ENCODE measurements at regions of chr10 and their contacts with region 1.

Region 1: GRCh38 chr10:97278491-97278989 is 13.9 kb downstream of the ARHGAP19 start:
- DNase-seq: no peak
- ATAC-seq: peak; percentile 67
- H3K4me3 Mint-ChIP-seq: no peak overlapping the region
- H3K27ac Mint-ChIP-seq: no peak overlapping the region
- H3K4me1 Mint-ChIP-seq: peaks cover 20% of the 10 kb centered on the region
- H3K27me3 Mint-ChIP-seq: no peaks in the 10 kb centered on the region
- CTCF ChIP-seq: peak; percentile 49

Region 2: DNA sequence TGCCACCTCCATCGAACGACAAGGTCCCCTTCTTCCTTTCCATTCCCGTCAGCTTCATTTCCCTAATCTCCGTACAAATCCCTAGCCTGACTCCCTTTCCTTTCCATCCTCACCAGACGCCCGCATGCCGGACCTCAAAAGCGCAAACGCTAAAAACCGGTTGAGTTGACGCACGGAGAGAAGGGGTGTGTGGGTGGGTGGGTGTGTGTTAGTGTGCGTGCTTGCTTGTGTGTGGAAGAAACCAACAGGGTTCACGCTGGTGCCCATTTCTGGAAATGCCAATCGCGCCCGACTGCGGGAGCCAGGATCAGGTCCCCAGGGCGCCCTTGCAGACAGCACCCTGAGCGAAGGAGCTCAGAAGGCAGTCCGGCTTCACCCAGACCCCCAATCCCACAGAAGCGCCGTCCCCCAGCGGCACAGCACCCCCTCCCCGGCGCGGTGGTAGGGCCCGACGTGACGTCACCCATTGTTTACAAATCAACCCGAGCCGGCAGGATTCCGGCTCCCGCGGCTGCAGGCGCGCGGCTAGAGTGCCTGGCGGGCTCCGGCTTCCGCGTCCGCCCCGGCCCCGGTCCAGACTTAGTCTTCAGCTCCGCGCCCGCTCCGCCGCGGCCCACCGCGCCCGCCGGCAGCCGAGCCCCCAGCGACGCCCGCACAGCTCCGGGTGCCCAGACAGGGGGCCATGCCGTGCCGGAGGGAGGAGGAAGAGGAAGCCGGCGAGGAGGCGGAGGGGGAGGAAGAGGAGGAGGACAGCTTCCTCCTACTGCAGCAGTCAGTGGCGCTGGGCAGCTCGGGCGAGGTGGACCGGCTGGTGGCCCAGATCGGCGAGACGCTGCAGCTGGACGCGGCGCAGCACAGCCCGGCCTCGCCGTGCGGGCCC is 40.5 kb after region 1 on chr10 and contains the start of gene FRAT1:
- CTCF ChIA-PET with region 1: interaction called, 9 read pairs
- POLR2A ChIA-PET with region 1: no interaction called
- intact Hi-C with region 1: loop called (anchors 5 kb)
- DNase-seq: peak; percentile 91
- ATAC-seq: peak; percentile 66
- H3K4me3 Mint-ChIP-seq: peak within 1 kb of the TSS; percentile 92
- H3K27ac Mint-ChIP-seq: peak within 1 kb of the TSS; percentile 100
- H3K4me1 Mint-ChIP-seq: peaks cover 30% of the 10 kb centered on the region
- H3K27me3 Mint-ChIP-seq: no peaks in the 10 kb centered on the region
- CTCF ChIP-seq: no peak
- total RNA-seq, gene FRAT1: 6.9 TPM in 2 replicates

Region 3: GRCh38 chr10:97341416-97341815 is 62.9 kb after region 1 on chr10:
- CTCF ChIA-PET with region 1: no interaction called
- POLR2A ChIA-PET with region 1: no interaction called
- intact Hi-C with region 1: no loop called
- DNase-seq: no peak
- ATAC-seq: no peak
- H3K4me3 Mint-ChIP-seq: no peak overlapping the region
- H3K27ac Mint-ChIP-seq: no peak overlapping the region
- H3K4me1 Mint-ChIP-seq: peaks cover 5% of the 10 kb centered on the region
- H3K27me3 Mint-ChIP-seq: no peaks in the 10 kb centered on the region
- CTCF ChIP-seq: no peak

Region 4: GRCh38 chr10:97355571-97355975 is 77.0 kb after region 1 on chr10:
- CTCF ChIA-PET with region 1: interaction called, 6 read pairs
- POLR2A ChIA-PET with region 1: interaction called, 4 read pairs
- intact Hi-C with region 1: loop called (anchors 2 kb)
- DNase-seq: no peak
- ATAC-seq: no peak
- H3K4me3 Mint-ChIP-seq: no peak overlapping the region
- H3K27ac Mint-ChIP-seq: no peak overlapping the region
- H3K4me1 Mint-ChIP-seq: no peaks in the 10 kb centered on the region
- H3K27me3 Mint-ChIP-seq: no peaks in the 10 kb centered on the region
- CTCF ChIP-seq: no peak

Region 5: GRCh38 chr10:97553575-97554031 is 275.1 kb after region 1 on chr10:
- CTCF ChIA-PET with region 1: interaction called, 3 read pairs
- POLR2A ChIA-PET with region 1: no interaction called
- intact Hi-C with region 1: loop called (anchors 10 kb)
- DNase-seq: peak; percentile 35
- ATAC-seq: peak; percentile 90
- H3K4me3 Mint-ChIP-seq: no peak overlapping the region
- H3K27ac Mint-ChIP-seq: no peak overlapping the region
- H3K4me1 Mint-ChIP-seq: no peaks in the 10 kb centered on the region
- H3K27me3 Mint-ChIP-seq: no peaks in the 10 kb centered on the region
- CTCF ChIP-seq: no peak